Dendritic cell treated with granulocyte-macrophage colony-stimulating factor and Interleukin-4, amounts not matched to agents 40 ng/mL and 50 ng/mL, for 4 days (primary cell): ENCODE measurements at regions of chr7 and their contacts with region 1.

Region 1: DNA sequence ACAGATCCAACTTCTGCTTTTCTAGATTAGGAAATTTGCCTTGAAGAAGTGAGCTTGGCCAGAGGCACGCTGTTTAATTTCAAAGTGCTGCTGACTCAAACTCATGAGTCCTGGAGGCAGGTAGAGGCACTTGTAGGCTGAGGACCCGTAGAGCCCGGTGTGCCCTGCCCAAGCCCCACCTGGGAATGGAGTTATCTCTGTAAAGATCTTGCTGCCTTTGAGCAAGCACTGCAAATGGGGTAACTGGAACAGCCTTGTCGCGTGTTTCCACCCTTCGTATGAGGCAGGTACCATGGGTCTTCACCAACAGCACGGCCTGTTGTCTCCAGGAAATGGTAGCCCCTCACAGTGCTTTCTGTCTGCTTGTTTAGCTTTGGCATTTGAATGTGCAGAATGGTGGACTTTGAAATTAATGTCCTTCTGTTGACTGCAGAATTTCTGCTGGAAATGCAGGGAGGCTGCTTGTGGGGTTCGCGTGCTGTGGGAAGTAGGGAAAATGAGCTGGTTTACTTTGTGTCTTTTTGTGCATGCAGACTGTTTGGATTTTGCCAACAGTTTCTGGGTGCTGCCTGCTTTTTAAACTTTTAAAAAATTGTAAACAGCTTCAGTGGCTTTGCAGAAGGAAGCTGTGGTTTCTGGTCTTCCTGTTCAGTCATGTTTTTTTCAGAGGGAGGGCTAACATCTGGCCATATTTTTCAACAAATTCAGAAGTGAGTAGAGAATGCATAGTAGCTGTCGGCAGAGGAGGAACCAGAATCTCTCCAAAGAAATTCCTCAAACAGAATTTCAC is 27.2 kb downstream of the CCM2 start:
- H3K4me3 Mint-ChIP-seq: peak overlapping the region; percentile 77
- H3K27ac Mint-ChIP-seq: peak overlapping the region; percentile 87
- H3K4me1 Mint-ChIP-seq: peaks cover 59% of the 10 kb centered on the region
- H3K27me3 Mint-ChIP-seq: no peaks in the 10 kb centered on the region

Region 2: GRCh38 chr7:44944821-44945220 is 82.4 kb before region 1 on chr7:
- intact Hi-C with region 1: no loop called
- H3K4me3 Mint-ChIP-seq: no peak overlapping the region
- H3K27ac Mint-ChIP-seq: no peak overlapping the region
- H3K4me1 Mint-ChIP-seq: no peaks in the 10 kb centered on the region
- H3K27me3 Mint-ChIP-seq: no peaks in the 10 kb centered on the region

Region 3: GRCh38 chr7:44973610-44974401 is 53.4 kb before region 1 on chr7:
- intact Hi-C with region 1: loop called (anchors 10 kb)
- H3K4me3 Mint-ChIP-seq: no peak overlapping the region
- H3K27ac Mint-ChIP-seq: peak overlapping the region; percentile 22
- H3K4me1 Mint-ChIP-seq: peaks cover 58% of the 10 kb centered on the region
- H3K27me3 Mint-ChIP-seq: no peaks in the 10 kb centered on the region

Region 4: GRCh38 chr7:44986218-44987053 is 40.7 kb before region 1 on chr7:
- intact Hi-C with region 1: no loop called
- H3K4me3 Mint-ChIP-seq: peak overlapping the region; percentile 94
- H3K27ac Mint-ChIP-seq: peak overlapping the region; percentile 97
- H3K4me1 Mint-ChIP-seq: peaks cover 69% of the 10 kb centered on the region
- H3K27me3 Mint-ChIP-seq: no peaks in the 10 kb centered on the region